ENCODE measurements at regions of chr4 and their contacts with region 1.

Region 1: DNA sequence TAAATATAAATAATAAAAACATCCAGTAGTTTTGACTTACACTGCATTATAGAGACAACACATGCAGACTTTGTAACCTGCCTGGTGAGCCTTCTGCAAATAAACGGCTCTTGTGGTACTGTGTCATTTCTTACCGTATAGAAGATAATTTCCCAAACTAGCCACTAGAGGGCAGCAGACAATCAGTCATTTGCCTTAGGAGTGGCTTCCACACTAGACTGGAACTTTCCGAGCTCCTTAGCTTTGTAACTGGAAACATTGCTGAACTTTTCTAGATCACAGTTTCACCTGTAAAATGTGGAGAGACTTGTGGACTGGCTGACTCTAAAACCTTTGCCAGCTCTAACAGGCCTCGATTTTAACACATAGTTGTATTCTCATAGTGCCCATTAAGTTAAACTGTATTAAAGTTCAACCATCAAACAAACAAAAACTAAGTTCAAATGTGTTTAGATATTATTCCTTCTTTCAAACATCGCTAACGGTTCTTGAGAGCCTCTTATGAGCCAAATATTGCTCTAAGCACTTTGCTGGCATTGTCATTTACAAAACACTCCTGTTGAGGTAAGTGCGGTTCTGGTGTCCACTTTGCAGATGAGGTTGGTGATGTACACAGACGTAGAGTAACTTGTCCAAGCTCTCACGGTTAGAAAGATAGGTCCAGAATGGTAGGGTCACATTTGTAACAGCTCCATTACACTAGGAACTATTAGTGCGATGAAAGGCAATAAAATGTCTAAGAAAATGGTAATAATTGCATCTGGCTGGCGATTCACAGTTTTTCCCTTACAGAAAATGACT is 345.5 kb downstream of the ANK2 start:
- DNase-seq: peak in 8 of 9 experiments; percentile 1 to 80 (median 48)
- ATAC-seq: peak; percentile 78
- H3K4me3 ChIP-seq: no peak overlapping the region
- H3K4me3 Mint-ChIP-seq: no peak overlapping the region
- H3K27ac ChIP-seq: no peak overlapping the region
- H3K27ac Mint-ChIP-seq: no peak overlapping the region
- H3K4me1 ChIP-seq: no peaks in the 10 kb centered on the region
- H3K4me1 Mint-ChIP-seq: no peaks in the 10 kb centered on the region
- H3K27me3 ChIP-seq: peaks cover 0 to 6% of the 10 kb centered on the region in 2 experiments
- H3K27me3 Mint-ChIP-seq: peaks cover 2% of the 10 kb centered on the region
- CTCF ChIP-seq: peak; percentile 92

Region 2: DNA sequence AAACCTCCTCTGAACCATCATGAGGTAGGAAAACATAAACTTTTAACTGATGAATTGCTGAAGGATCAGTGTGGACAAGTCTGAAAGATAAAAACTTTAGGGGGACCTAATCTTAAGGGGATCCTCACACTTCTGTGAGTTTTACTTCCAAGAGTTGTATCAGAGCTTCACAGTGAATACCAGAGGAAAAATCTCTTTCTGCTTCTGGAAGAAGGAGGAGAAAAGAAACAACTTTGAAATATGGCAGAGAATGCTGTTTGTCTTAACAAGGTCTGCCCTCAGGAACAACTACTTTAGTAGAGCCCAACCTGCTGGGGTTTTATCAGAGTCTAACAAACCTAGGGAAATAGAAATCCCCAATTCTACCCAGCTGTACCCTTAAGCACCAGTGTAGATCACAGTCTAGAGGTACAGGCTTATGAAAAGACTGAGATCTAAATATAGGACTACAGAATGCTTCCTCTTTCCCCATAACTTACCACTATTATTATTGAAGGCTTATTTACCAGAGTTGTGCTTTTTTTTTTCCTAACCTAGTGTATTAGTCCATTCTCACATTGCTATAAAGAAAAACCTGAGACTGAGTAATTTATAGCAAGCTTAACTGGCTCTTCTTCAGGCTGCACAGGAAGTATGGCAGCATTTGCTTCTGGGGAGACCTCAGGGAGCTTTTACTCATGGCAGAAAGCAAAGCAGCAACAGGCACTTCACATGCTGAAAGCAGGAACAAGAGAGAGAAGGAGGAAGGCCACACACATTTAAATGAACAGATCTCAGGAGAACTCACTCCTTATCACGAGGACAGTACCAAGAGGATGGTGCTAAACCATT is 198.7 kb after region 1 on chr4:
- CTCF ChIA-PET with region 1: no interaction called
- POLR2A ChIA-PET with region 1: no interaction called
- intact Hi-C with region 1: no loop called
- DNase-seq: no peak
- ATAC-seq: no peak
- H3K4me3 ChIP-seq: no peak overlapping the region
- H3K4me3 Mint-ChIP-seq: no peak overlapping the region
- H3K27ac ChIP-seq: no peak overlapping the region
- H3K27ac Mint-ChIP-seq: peak overlapping the region; percentile 24
- H3K4me1 ChIP-seq: peaks cover 5% of the 10 kb centered on the region
- H3K4me1 Mint-ChIP-seq: peaks cover 62% of the 10 kb centered on the region
- H3K27me3 ChIP-seq: no peaks in the 10 kb centered on the region
- H3K27me3 Mint-ChIP-seq: no peaks in the 10 kb centered on the region
- CTCF ChIP-seq: no peak

Region 3: GRCh38 chr4:113738251-113738650 is 343.3 kb after region 1 on chr4:
- CTCF ChIA-PET with region 1: no interaction called
- POLR2A ChIA-PET with region 1: no interaction called
- intact Hi-C with region 1: no loop called
- DNase-seq: no peak
- ATAC-seq: no peak
- H3K4me3 ChIP-seq: no peak overlapping the region
- H3K4me3 Mint-ChIP-seq: no peak overlapping the region
- H3K27ac ChIP-seq: no peak overlapping the region
- H3K27ac Mint-ChIP-seq: no peak overlapping the region
- H3K4me1 ChIP-seq: peaks cover 13% of the 10 kb centered on the region
- H3K4me1 Mint-ChIP-seq: peaks cover 53% of the 10 kb centered on the region
- H3K27me3 ChIP-seq: no peaks in the 10 kb centered on the region
- H3K27me3 Mint-ChIP-seq: no peaks in the 10 kb centered on the region
- CTCF ChIP-seq: no peak

Region 4: DNA sequence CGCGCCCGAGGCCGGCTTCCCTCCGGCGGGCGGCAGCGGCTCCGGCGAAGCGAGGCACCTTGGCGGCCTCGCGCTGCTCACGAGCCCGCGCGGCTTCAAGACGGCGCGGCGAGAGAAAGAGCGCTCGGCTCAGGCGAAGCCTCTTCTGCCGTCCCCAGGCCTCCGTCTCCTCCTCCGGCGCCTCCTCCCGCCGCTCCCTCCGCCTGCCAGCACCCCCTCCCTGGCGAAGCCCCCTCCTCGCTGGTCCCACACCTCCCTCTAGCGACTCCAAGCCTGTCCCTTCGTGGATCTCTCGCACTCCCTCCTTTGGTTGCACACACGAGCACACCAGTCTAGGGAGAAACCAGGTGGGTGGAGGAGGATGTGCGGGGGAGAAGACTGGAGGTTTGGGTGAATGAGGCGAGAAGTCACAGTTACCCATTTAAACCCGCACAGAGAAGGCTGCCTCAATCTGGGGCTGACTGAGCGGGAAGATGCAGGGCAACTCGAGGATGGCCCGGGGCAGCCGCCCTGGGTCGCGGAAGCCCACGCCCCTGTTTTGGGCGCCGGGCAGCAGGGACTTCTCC is 366.8 kb after region 1 on chr4 and contains the start of gene CAMK2D:
- CTCF ChIA-PET with region 1: no interaction called
- POLR2A ChIA-PET with region 1: no interaction called
- intact Hi-C with region 1: loop called in 1 of 2 experiments (anchors 10 kb)
- DNase-seq: peak; percentile 62 to 95 (median 80)
- ATAC-seq: peak; percentile 58
- H3K4me3 ChIP-seq: peak within 1 kb of the TSS; percentile 75 to 85
- H3K4me3 Mint-ChIP-seq: peak within 1 kb of the TSS; percentile 94
- H3K27ac ChIP-seq: peak within 1 kb of the TSS; percentile 96
- H3K27ac Mint-ChIP-seq: peak within 1 kb of the TSS; percentile 98
- H3K4me1 ChIP-seq: peaks cover 26% of the 10 kb centered on the region
- H3K4me1 Mint-ChIP-seq: peaks cover 38% of the 10 kb centered on the region
- H3K27me3 ChIP-seq: no peaks in the 10 kb centered on the region
- H3K27me3 Mint-ChIP-seq: no peaks in the 10 kb centered on the region
- CTCF ChIP-seq: no peak
- total RNA-seq, gene CAMK2D: 29.6 to 31.1 TPM

Region 5: GRCh38 chr4:114076899-114077570 is 682.1 kb after region 1 on chr4:
- CTCF ChIA-PET with region 1: interaction called, 29 read pairs
- POLR2A ChIA-PET with region 1: no interaction called
- intact Hi-C with region 1: no loop called
- DNase-seq: no peak
- ATAC-seq: no peak
- H3K4me3 ChIP-seq: no peak overlapping the region
- H3K4me3 Mint-ChIP-seq: no peak overlapping the region
- H3K27ac ChIP-seq: no peak overlapping the region
- H3K27ac Mint-ChIP-seq: no peak overlapping the region
- H3K4me1 ChIP-seq: no peaks in the 10 kb centered on the region
- H3K4me1 Mint-ChIP-seq: no peaks in the 10 kb centered on the region
- H3K27me3 ChIP-seq: no peaks in the 10 kb centered on the region
- H3K27me3 Mint-ChIP-seq: no peaks in the 10 kb centered on the region
- CTCF ChIP-seq: no peak

Region 6: GRCh38 chr4:114386637-114387233 is 991.8 kb after region 1 on chr4:
- CTCF ChIA-PET with region 1: interaction called, 4 read pairs
- POLR2A ChIA-PET with region 1: no interaction called
- intact Hi-C with region 1: loop called (anchors 2 kb)
- DNase-seq: peak in 2 of 9 experiments; percentile 16 to 38
- ATAC-seq: no peak
- H3K4me3 ChIP-seq: no peak overlapping the region
- H3K4me3 Mint-ChIP-seq: no peak overlapping the region
- H3K27ac ChIP-seq: no peak overlapping the region
- H3K27ac Mint-ChIP-seq: no peak overlapping the region
- H3K4me1 ChIP-seq: no peaks in the 10 kb centered on the region
- H3K4me1 Mint-ChIP-seq: no peaks in the 10 kb centered on the region
- H3K27me3 ChIP-seq: no peaks in the 10 kb centered on the region
- H3K27me3 Mint-ChIP-seq: peaks cover 8% of the 10 kb centered on the region
- CTCF ChIP-seq: peak; percentile 54

Region 7: DNA sequence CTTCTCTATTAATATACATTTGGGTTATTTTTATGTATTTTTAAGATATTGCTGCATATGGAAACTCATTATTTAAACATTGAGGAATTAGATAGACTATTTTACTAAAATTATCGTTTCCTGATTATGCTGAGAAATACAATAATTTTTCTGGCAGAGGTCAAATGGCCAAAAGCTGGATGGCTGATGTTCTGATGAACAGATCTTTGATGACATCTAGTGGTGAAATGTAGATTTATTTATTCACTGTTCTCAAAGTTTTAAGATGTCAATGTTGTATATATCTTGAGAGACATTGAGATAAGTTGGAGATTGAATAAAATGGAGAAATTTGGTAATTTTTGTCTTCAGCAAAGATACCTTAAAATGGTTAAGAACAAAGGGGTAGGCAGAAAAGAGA is 1299.8 kb after region 1 on chr4:
- CTCF ChIA-PET with region 1: interaction called, 3 read pairs
- POLR2A ChIA-PET with region 1: no interaction called
- intact Hi-C with region 1: loop called (anchors 1 kb)
- DNase-seq: peak in 2 of 9 experiments; percentile 23 to 41
- ATAC-seq: no peak
- H3K4me3 ChIP-seq: no peak overlapping the region
- H3K4me3 Mint-ChIP-seq: no peak overlapping the region
- H3K27ac ChIP-seq: no peak overlapping the region
- H3K27ac Mint-ChIP-seq: no peak overlapping the region
- H3K4me1 ChIP-seq: no peaks in the 10 kb centered on the region
- H3K4me1 Mint-ChIP-seq: no peaks in the 10 kb centered on the region
- H3K27me3 ChIP-seq: no peaks in the 10 kb centered on the region
- H3K27me3 Mint-ChIP-seq: peaks cover 8% of the 10 kb centered on the region
- CTCF ChIP-seq: peak; percentile 52

Measured in CD8-positive, alpha-beta T cell (primary cell).